Pancreas (tissue), 10 donors: ENCODE measurements at regions of chr10 and their contacts with region 1.

Region 1: DNA sequence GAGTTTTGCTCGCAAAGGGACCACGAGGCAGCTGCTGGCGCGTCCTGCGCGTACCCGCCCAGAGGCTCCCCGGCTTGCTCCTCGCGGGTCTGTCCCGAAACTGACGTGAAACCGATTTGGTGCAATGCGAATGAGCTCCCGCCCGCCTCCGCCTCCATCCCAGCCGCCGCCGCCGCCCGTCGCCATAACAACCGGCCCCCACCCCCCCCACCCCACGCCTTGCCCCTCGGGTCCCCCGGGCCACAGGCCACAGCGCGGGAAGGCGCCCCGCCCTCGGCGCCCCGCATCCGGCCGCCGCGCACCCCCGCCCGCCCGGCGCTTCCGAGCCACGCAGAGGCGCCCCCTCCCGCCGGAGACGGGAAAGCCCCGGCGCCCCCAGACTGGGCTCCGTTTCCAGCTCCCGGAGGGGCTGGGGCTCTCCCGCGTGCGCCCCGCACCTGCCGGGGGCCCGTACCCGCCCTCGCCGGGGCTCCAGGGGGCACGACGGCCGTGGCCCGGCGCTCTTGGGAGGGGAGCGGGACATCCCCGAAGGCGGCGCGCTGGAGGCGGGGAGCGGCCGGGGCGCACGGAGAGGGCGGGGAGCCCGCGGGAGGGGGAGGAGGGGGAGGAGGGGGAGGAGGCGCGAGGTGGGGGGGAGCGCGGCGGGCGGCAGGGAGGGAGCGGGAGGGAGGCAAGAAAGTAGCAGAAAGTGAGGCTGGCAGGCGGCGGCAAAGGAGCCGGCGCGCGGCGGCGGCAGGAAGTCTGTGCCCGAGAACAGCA is at the start of gene CAMK1D:
- DNase-seq: peak; percentile 84 to 93 (median 90)
- ATAC-seq: peak; percentile 57 to 73 (median 64)
- H3K4me3 ChIP-seq: peak within 1 kb of the TSS; percentile 69 to 95 (median 84)
- H3K27ac ChIP-seq: peak within 1 kb of the TSS; percentile 85 to 89 (median 86)
- H3K4me1 ChIP-seq: peaks cover 18 to 26% (median 25%) of the 10 kb centered on the region in 3 donors
- H3K27me3 ChIP-seq: no peaks in the 10 kb centered on the region
- CTCF ChIP-seq: no peak
- total RNA-seq, gene CAMK1D: 20.2 to 30.1 (median 24.2) TPM

Region 2: DNA sequence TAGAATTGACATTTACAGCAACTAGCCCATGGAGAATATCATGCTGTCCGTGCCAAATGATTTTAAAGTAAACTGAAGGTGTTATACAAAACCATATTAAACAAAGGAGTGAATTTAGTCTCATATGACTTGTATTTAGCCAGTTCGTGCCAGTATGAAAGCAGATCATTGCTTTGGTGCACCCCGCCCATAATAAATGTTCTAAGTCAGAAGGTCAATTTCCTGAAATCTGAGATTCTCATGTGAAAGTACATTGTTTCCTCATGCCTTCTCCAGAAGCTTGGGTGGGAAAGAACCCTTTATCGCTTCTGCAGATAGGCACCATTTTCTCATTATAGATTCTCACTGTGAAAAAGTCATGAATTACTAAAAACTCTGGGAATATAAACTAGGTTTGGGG is 106.7 kb after region 1 on chr10:
- intact Hi-C with region 1: no loop called
- DNase-seq: no peak
- ATAC-seq: peak in 3 of 4 donors; percentile 34 to 65 (median 48)
- H3K4me3 ChIP-seq: no peak overlapping the region
- H3K27ac ChIP-seq: no peak overlapping the region
- H3K4me1 ChIP-seq: peaks cover 3 to 8% (median 6%) of the 10 kb centered on the region in 3 donors
- H3K27me3 ChIP-seq: no peaks in the 10 kb centered on the region
- CTCF ChIP-seq: no peak

Region 3: GRCh38 chr10:12484941-12485805 is 136.1 kb after region 1 on chr10:
- intact Hi-C with region 1: loop called in 1 of 3 experiments (anchors 10 kb)
- DNase-seq: peak; percentile 54 to 80 (median 62)
- ATAC-seq: peak; percentile 60 to 82 (median 76)
- H3K4me3 ChIP-seq: peak overlapping the region in 1 of 4 donors; percentile 17
- H3K27ac ChIP-seq: peak overlapping the region; percentile 30 to 66 (median 50)
- H3K4me1 ChIP-seq: peaks cover 10 to 27% (median 17%) of the 10 kb centered on the region in 3 donors
- H3K27me3 ChIP-seq: no peaks in the 10 kb centered on the region
- CTCF ChIP-seq: no peak